ENCODE measurements at regions of chr11 and their contacts with region 1.

Region 1: GRCh38 chr11:45468262-45468856 is 182.2 kb upstream of the SYT13 start:
- DNase-seq: no peak
- ATAC-seq: no peak

Region 2: GRCh38 chr11:45736424-45736823 is 268.1 kb after region 1 on chr11:
- intact Hi-C with region 1: loop called (anchors 5 kb)
- DNase-seq: no peak
- ATAC-seq: peak; percentile 83

Measured in Right ventricle myocardium inferior (tissue), 1 donor.